CD4-positive, alpha-beta memory T cell (primary cell): ENCODE measurements at regions of chr17 and their contacts with region 1.

Region 1: GRCh38 chr17:7572588-7573323 is 6.7 kb upstream of the CD68 start:
- DNase-seq: peak; percentile 100
- H3K4me3 ChIP-seq: peak overlapping the region; percentile 57 to 93
- H3K4me3 Mint-ChIP-seq: peak overlapping the region; percentile 94 to 100 (median 98)
- H3K27ac ChIP-seq: peak overlapping the region; percentile 97
- H3K27ac Mint-ChIP-seq: peak overlapping the region; percentile 98 to 100 (median 99)
- H3K4me1 ChIP-seq: peaks cover 44% of the 10 kb centered on the region
- H3K4me1 Mint-ChIP-seq: peaks cover 25 to 62% (median 41%) of the 10 kb centered on the region in 4 donors
- H3K27me3 ChIP-seq: no peaks in the 10 kb centered on the region
- H3K27me3 Mint-ChIP-seq: no peaks in the 10 kb centered on the region

Region 2: GRCh38 chr17:7252176-7253043 is 320.3 kb before region 1 on chr17 and contains the start of gene ELP5:
- CTCF ChIA-PET with region 1: no interaction called
- POLR2A ChIA-PET with region 1: no interaction called
- intact Hi-C with region 1: loop called (anchors 5 kb)
- DNase-seq: peak in 4 of 5 donors; percentile 86 to 92 (median 88)
- H3K4me3 ChIP-seq: peak within 1 kb of the TSS; percentile 71 to 92
- H3K4me3 Mint-ChIP-seq: peak within 1 kb of the TSS; percentile 91 to 97 (median 95)
- H3K27ac ChIP-seq: peak within 1 kb of the TSS; percentile 98
- H3K27ac Mint-ChIP-seq: peak within 1 kb of the TSS; percentile 98 to 100 (median 99)
- H3K4me1 ChIP-seq: peaks cover 37% of the 10 kb centered on the region
- H3K4me1 Mint-ChIP-seq: peaks cover 25 to 49% (median 38%) of the 10 kb centered on the region in 4 donors
- H3K27me3 ChIP-seq: no peaks in the 10 kb centered on the region
- H3K27me3 Mint-ChIP-seq: no peaks in the 10 kb centered on the region
- total RNA-seq, gene ELP5: 29.8 to 30.9 TPM

Region 3: GRCh38 chr17:7561028-7561575 is 11.7 kb before region 1 on chr17:
- CTCF ChIA-PET with region 1: interaction called, 30 read pairs
- POLR2A ChIA-PET with region 1: interaction called, 72 read pairs
- intact Hi-C with region 1: loop called (anchors 1 kb)
- DNase-seq: peak; percentile 75 to 85 (median 76)
- H3K4me3 ChIP-seq: peak overlapping the region; percentile 72 to 84
- H3K4me3 Mint-ChIP-seq: peak overlapping the region; percentile 89 to 98 (median 94)
- H3K27ac ChIP-seq: peak overlapping the region; percentile 96
- H3K27ac Mint-ChIP-seq: peak overlapping the region; percentile 95 to 99 (median 97)
- H3K4me1 ChIP-seq: peaks cover 37% of the 10 kb centered on the region
- H3K4me1 Mint-ChIP-seq: peaks cover 25 to 37% (median 30%) of the 10 kb centered on the region in 4 donors
- H3K27me3 ChIP-seq: no peaks in the 10 kb centered on the region
- H3K27me3 Mint-ChIP-seq: no peaks in the 10 kb centered on the region

Region 4: GRCh38 chr17:7614422-7615264 is 41.9 kb after region 1 on chr17 and contains the start of gene FXR2:
- CTCF ChIA-PET with region 1: interaction called, 4 read pairs
- POLR2A ChIA-PET with region 1: interaction called, 5 read pairs
- intact Hi-C with region 1: loop called (anchors 1 kb)
- DNase-seq: peak; percentile 98 to 100 (median 99)
- H3K4me3 ChIP-seq: peak within 1 kb of the TSS; percentile 74 to 78
- H3K4me3 Mint-ChIP-seq: peak within 1 kb of the TSS; percentile 87 to 95 (median 93)
- H3K27ac ChIP-seq: peak within 1 kb of the TSS; percentile 66
- H3K27ac Mint-ChIP-seq: peak within 1 kb of the TSS; percentile 83 to 98 (median 97)
- H3K4me1 ChIP-seq: peaks cover 42% of the 10 kb centered on the region
- H3K4me1 Mint-ChIP-seq: peaks cover 22 to 49% (median 36%) of the 10 kb centered on the region in 4 donors
- H3K27me3 ChIP-seq: no peaks in the 10 kb centered on the region
- H3K27me3 Mint-ChIP-seq: no peaks in the 10 kb centered on the region
- total RNA-seq, gene FXR2: 44.1 to 46.6 TPM

Region 5: DNA sequence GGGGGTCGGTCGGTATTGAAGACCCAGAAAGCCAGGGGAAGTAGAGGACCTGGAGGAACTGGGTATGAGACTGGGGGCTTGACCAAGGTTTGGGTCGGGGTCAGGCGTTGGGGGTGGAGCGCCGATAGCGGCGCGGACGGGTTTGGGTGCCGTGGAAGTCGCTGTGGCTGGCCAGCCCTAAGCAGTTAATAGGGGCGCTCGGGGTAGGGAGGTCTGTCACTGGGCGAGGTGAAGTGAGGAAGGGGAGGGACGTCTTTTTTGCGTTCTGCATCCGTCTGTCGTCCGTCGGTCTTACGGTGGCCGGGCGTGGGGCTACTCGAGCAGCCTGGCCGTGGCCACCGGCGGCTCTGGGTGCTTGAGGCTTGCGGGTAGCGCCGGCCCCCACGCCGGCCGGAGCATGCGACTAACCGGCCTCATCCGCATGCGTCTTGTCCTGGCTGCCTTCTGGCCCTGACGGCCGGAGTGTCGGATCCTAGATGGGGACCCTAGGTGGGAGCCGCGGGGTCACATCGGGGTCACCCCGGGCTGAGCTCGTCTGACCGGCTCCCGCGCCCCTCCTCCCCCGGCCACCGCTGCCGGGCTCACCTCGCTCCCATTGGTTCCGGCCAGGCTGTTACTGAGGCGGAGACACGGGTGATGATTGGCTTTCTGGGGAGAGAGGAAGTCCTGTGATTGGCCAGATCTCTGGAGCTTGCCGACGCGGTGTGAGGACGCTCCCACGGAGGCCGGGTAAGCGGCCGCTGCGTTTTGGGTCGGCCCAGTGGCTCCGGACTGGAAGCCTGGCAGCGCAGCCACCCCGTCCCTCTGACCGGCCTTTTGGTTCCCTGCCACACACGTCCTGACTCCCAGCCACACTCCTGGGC is 271.8 kb after region 1 on chr17:
- CTCF ChIA-PET with region 1: no interaction called
- POLR2A ChIA-PET with region 1: no interaction called
- intact Hi-C with region 1: loop called (anchors 2 kb)
- DNase-seq: peak; percentile 82 to 87 (median 85)
- H3K4me3 ChIP-seq: peak overlapping the region; percentile 57 to 92
- H3K4me3 Mint-ChIP-seq: peak overlapping the region; percentile 92 to 99 (median 97)
- H3K27ac ChIP-seq: peak overlapping the region; percentile 99
- H3K27ac Mint-ChIP-seq: peak overlapping the region; percentile 99 to 100 (median 100)
- H3K4me1 ChIP-seq: peaks cover 30% of the 10 kb centered on the region
- H3K4me1 Mint-ChIP-seq: peaks cover 21 to 50% (median 35%) of the 10 kb centered on the region in 4 donors
- H3K27me3 ChIP-seq: no peaks in the 10 kb centered on the region
- H3K27me3 Mint-ChIP-seq: peaks cover 0 to 3% of the 10 kb centered on the region in 2 donors